ENCODE measurements at regions of chr1 and their contacts with region 1.

Region 1: DNA sequence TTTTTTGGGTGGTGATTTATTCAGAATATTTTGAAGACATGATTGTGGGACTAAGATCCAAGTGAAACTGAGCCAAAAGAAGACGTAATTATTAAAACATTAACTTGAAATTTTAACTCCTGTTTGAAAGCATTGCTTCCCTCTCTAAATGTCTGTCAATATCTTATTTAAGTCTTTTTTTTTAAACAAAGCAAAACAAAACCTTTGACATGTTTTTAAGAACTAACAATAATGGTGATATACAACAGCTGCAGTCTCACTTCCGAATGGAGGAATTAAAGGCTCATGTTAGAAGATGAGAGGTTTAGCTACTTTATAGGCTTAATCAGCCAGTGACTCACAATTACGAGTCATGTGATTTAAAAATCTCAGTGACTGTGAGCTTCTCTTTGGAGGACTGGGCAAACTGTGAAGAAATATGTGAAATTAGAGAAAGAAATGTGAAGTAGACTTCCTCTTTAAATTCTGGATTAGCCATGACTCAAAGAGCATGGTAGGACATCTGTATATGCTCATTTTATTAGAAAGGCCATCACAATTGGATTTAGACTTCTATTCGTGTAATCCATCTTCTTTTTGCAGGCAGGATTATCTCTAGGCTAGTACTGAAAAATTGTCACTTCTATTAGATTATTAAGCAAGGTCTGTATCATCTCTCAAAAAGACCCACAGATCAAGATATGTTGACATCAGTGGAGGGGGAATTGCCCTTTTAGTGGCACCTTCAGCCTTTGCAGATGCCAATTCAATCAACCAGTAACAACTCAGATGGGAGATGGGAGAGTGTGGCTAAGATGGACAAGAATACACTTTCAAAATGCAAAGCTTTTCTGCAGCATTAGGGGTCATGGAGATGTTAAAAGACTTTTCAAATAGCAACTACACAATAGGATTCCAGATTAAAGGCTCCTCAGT is 28.7 kb downstream of the KCNA3 start:
- DNase-seq: no peak
- ATAC-seq: peak; percentile 52
- H3K4me3 Mint-ChIP-seq: peak overlapping the region; percentile 25
- H3K27ac Mint-ChIP-seq: no peak overlapping the region
- H3K4me1 Mint-ChIP-seq: peaks cover 41% of the 10 kb centered on the region
- H3K27me3 Mint-ChIP-seq: no peaks in the 10 kb centered on the region

Region 2: GRCh38 chr1:110657351-110657750 is 11.3 kb after region 1 on chr1:
- CTCF ChIA-PET with region 1: interaction called, 13 read pairs
- POLR2A ChIA-PET with region 1: no interaction called
- intact Hi-C with region 1: no loop called
- DNase-seq: no peak
- ATAC-seq: peak; percentile 91
- H3K4me3 Mint-ChIP-seq: no peak overlapping the region
- H3K27ac Mint-ChIP-seq: no peak overlapping the region
- H3K4me1 Mint-ChIP-seq: peaks cover 35% of the 10 kb centered on the region
- H3K27me3 Mint-ChIP-seq: no peaks in the 10 kb centered on the region

Region 3: DNA sequence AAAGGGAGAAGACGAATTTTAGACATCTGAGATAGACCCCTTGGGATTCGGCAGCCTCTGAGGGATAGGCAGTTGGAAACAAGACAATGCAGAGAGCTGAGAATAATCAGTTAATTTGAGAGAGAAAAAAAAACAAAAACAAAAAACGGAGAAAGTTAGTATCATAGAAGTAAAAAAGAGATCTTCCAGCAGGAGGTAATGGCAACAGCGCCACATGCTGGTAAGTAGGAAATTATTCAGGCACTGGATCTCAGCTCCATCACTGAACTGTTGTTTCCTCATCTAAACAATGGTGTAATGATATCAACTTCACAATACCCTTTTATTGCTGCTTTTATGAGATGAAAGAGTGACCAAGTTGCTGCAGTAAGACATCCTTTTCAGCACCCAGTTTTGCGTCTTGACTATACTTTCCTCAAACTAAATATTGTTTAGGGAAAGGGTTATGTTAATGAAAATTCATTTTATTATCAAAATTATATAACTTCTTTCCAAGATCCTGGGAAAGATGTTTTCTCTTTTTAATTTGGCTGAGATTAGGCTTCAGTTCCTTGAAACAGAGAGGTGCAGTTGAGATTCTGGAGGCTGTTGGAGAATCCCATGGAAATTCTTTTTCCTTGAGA is 120.1 kb after region 1 on chr1:
- CTCF ChIA-PET with region 1: interaction called, 19 read pairs
- POLR2A ChIA-PET with region 1: no interaction called
- intact Hi-C with region 1: no loop called
- DNase-seq: peak; percentile 72
- ATAC-seq: peak; percentile 70
- H3K4me3 Mint-ChIP-seq: peak overlapping the region; percentile 5
- H3K27ac Mint-ChIP-seq: no peak overlapping the region
- H3K4me1 Mint-ChIP-seq: peaks cover 5% of the 10 kb centered on the region
- H3K27me3 Mint-ChIP-seq: peaks cover 6% of the 10 kb centered on the region

Region 4: GRCh38 chr1:110879758-110880606 is 233.9 kb after region 1 on chr1:
- CTCF ChIA-PET with region 1: no interaction called
- POLR2A ChIA-PET with region 1: interaction called, 4 read pairs
- intact Hi-C with region 1: loop called (anchors 1 kb)
- DNase-seq: peak; percentile 77
- ATAC-seq: peak; percentile 66
- H3K4me3 Mint-ChIP-seq: peak overlapping the region; percentile 85
- H3K27ac Mint-ChIP-seq: peak overlapping the region; percentile 100
- H3K4me1 Mint-ChIP-seq: peaks cover 63% of the 10 kb centered on the region
- H3K27me3 Mint-ChIP-seq: no peaks in the 10 kb centered on the region

Region 5: DNA sequence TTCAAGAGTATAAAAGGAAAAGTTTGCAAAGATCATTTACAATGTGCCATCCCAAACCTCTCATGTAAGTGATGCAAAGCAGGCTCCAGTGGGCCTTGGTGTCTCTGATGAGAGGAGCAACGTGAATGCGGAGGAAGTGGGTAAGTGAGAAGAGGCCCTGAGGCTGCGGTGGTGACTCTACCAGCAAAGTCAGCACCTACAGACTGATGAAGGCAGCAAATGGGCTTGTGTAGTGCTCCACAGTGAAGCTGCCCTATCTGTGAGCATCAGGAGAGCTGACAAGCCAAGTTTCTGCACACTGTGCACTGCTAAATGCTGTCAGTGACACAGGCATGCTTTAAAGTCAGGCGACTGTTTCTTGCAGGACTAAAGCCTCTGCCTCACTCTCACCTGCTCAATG is 957.9 kb after region 1 on chr1:
- CTCF ChIA-PET with region 1: no interaction called
- POLR2A ChIA-PET with region 1: no interaction called
- intact Hi-C with region 1: loop called in 1 of 2 experiments (anchors 5 kb)
- DNase-seq: peak; percentile 89
- ATAC-seq: peak; percentile 81
- H3K4me3 Mint-ChIP-seq: peak overlapping the region; percentile 40
- H3K27ac Mint-ChIP-seq: peak overlapping the region; percentile 96
- H3K4me1 Mint-ChIP-seq: peaks cover 77% of the 10 kb centered on the region
- H3K27me3 Mint-ChIP-seq: no peaks in the 10 kb centered on the region

Measured in activated CD4-positive, alpha-beta T cell treated with anti-CD3 and anti-CD28 coated beads for 36 hours (primary cell).